B cell (primary cell): ENCODE measurements at regions of chr14 and their contacts with region 1.

Region 1: GRCh38 chr14:50532502-50533240 is at the start of gene MAP4K5:
- DNase-seq: peak; percentile 94
- ATAC-seq: peak; percentile 91
- H3K4me3 ChIP-seq: peak within 1 kb of the TSS; percentile 62 to 89 (median 76)
- H3K4me3 Mint-ChIP-seq: peak within 1 kb of the TSS; percentile 93
- H3K27ac ChIP-seq: peak within 1 kb of the TSS; percentile 83 to 88
- H3K27ac Mint-ChIP-seq: peak within 1 kb of the TSS; percentile 95
- H3K4me1 ChIP-seq: peaks cover 18 to 37% of the 10 kb centered on the region in 2 donors
- H3K4me1 Mint-ChIP-seq: peaks cover 47% of the 10 kb centered on the region
- H3K27me3 ChIP-seq: no peaks in the 10 kb centered on the region
- H3K27me3 Mint-ChIP-seq: no peaks in the 10 kb centered on the region
- CTCF ChIP-seq: peak; percentile 79
- total RNA-seq, gene MAP4K5: 58.2 and 60.0 TPM in 2 replicates

Region 2: GRCh38 chr14:49585803-49586672 is 946.6 kb before region 1 on chr14 and contains the start of gene RPS29:
- CTCF ChIA-PET with region 1: no interaction called
- POLR2A ChIA-PET with region 1: no interaction called
- intact Hi-C with region 1: loop called (anchors 10 kb)
- DNase-seq: peak; percentile 100
- ATAC-seq: peak; percentile 86
- H3K4me3 ChIP-seq: peak within 1 kb of the TSS; percentile 70 to 100 (median 88)
- H3K4me3 Mint-ChIP-seq: peak within 1 kb of the TSS; percentile 88
- H3K27ac ChIP-seq: peak within 1 kb of the TSS; percentile 88 to 95
- H3K27ac Mint-ChIP-seq: peak within 1 kb of the TSS; percentile 100
- H3K4me1 ChIP-seq: peaks cover 17 to 24% of the 10 kb centered on the region in 2 donors
- H3K4me1 Mint-ChIP-seq: peaks cover 46% of the 10 kb centered on the region
- H3K27me3 ChIP-seq: no peaks in the 10 kb centered on the region
- H3K27me3 Mint-ChIP-seq: no peaks in the 10 kb centered on the region
- CTCF ChIP-seq: no peak
- total RNA-seq, gene RPS29: 2,497 and 2,873 TPM in 2 replicates

Region 3: GRCh38 chr14:50055461-50056228 is 477.0 kb before region 1 on chr14:
- CTCF ChIA-PET with region 1: no interaction called
- POLR2A ChIA-PET with region 1: no interaction called
- intact Hi-C with region 1: loop called (anchors 5 kb)
- DNase-seq: peak; percentile 64
- ATAC-seq: peak; percentile 93
- H3K4me3 ChIP-seq: no peak overlapping the region
- H3K4me3 Mint-ChIP-seq: peak overlapping the region; percentile 7
- H3K27ac ChIP-seq: no peak overlapping the region
- H3K27ac Mint-ChIP-seq: peak overlapping the region; percentile 77
- H3K4me1 ChIP-seq: peaks cover 15 to 35% of the 10 kb centered on the region in 2 donors
- H3K4me1 Mint-ChIP-seq: peaks cover 44% of the 10 kb centered on the region
- H3K27me3 ChIP-seq: no peaks in the 10 kb centered on the region
- H3K27me3 Mint-ChIP-seq: no peaks in the 10 kb centered on the region
- CTCF ChIP-seq: peak; percentile 52

Region 4: DNA sequence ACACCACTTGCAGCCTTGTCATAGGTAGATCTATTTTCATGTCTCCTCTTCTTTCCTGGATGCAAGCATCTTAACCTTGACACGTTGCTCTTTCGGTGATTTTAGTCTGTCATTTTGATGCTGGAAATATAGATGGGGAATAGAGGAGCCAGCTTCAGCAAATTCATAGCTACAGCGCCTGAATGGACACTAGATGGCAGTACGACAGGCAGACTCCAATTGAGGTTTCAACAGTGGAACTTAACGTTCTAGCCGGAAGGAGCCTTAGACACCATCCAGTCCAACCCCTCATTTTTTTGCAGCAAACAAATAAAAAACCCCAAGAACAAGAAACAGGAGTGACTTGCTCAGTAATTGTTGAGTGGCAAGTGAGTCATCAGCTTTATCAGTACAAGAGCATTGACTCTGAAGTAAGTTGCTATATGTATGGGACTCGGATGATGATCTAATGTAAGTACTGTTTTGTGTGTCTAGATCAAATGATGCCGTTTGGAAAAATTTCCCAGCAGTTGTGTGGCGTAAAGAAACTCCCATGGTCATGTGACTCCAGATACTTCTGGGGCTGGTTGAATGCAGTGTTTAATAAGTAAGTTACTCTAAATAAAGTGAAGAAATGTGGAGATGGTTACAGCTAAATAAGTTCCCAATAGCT is 211.5 kb before region 1 on chr14:
- CTCF ChIA-PET with region 1: interaction called, 26 read pairs
- POLR2A ChIA-PET with region 1: no interaction called
- intact Hi-C with region 1: loop called (anchors 1 kb)
- DNase-seq: peak; percentile 81
- ATAC-seq: peak; percentile 94
- H3K4me3 ChIP-seq: no peak overlapping the region
- H3K4me3 Mint-ChIP-seq: no peak overlapping the region
- H3K27ac ChIP-seq: peak overlapping the region in 1 of 2 donors; percentile 64
- H3K27ac Mint-ChIP-seq: no peak overlapping the region
- H3K4me1 ChIP-seq: peaks cover 10% of the 10 kb centered on the region in 2 donors
- H3K4me1 Mint-ChIP-seq: peaks cover 17% of the 10 kb centered on the region
- H3K27me3 ChIP-seq: no peaks in the 10 kb centered on the region
- H3K27me3 Mint-ChIP-seq: no peaks in the 10 kb centered on the region
- CTCF ChIP-seq: peak; percentile 89

Region 5: DNA sequence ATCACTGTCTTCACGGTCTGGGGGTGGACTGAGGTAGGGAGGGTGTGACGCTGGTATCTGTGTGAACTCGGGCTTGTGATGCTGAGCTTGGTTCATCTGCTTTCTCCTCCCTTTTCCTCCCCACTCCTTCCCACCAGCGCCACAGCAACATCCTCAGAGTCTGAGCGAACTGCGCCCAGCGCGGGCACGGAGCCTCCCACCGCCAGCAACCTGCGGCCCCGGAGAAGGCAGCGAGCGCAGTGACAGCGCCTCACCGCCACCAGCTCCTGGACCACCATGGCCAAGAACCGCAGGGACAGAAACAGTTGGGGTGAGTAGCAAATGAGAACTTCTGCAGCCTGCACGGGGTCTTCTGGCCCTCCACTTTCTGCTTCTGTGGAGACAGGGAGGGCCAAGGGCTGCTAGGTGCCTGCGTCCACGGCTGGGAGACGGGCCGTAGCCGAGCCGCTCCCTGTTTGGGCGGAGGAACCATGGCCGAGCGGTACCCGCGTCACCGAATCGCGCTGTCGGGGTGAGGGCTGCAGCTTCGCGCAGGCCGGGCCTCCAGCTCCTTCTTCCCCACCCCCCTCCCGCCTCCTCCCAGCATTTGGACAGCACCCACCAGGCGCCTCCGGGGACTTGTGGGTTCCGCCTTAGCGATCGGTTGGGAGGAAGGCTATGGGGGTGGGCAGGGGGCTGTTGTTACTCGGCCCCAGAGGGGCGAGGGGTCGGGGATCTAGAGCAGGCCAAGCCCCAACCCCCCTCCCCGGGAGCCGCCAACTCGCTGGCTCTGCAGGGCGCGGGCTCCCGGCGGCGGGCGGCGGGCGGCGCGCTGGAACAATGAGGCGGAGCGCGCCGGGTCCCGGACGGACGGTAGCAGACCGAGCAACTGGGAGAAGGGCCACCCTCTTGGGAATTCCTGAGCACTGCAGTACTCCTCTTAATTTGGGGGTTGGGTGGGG is 27.6 kb after region 1 on chr14 and contains the start of gene ATL1:
- CTCF ChIA-PET with region 1: no interaction called
- POLR2A ChIA-PET with region 1: no interaction called
- intact Hi-C with region 1: loop called (anchors 2 kb)
- DNase-seq: peak; percentile 65
- ATAC-seq: peak; percentile 78
- H3K4me3 ChIP-seq: peak within 1 kb of the TSS; percentile 26 to 75 (median 56)
- H3K4me3 Mint-ChIP-seq: peak within 1 kb of the TSS; percentile 82
- H3K27ac ChIP-seq: no peak within 1 kb of the TSS
- H3K27ac Mint-ChIP-seq: no peak within 1 kb of the TSS
- H3K4me1 ChIP-seq: peaks cover 18 to 20% of the 10 kb centered on the region in 2 donors
- H3K4me1 Mint-ChIP-seq: peaks cover 19% of the 10 kb centered on the region
- H3K27me3 ChIP-seq: peaks cover 0 to 23% (median 21%) of the 10 kb centered on the region in 4 experiments
- H3K27me3 Mint-ChIP-seq: peaks cover 34% of the 10 kb centered on the region
- CTCF ChIP-seq: no peak
- total RNA-seq, gene ATL1: 2.9 and 3.8 TPM in 2 replicates